B cell (primary cell): ENCODE measurements at regions of chr10 and their contacts with region 1.

Region 1: DNA sequence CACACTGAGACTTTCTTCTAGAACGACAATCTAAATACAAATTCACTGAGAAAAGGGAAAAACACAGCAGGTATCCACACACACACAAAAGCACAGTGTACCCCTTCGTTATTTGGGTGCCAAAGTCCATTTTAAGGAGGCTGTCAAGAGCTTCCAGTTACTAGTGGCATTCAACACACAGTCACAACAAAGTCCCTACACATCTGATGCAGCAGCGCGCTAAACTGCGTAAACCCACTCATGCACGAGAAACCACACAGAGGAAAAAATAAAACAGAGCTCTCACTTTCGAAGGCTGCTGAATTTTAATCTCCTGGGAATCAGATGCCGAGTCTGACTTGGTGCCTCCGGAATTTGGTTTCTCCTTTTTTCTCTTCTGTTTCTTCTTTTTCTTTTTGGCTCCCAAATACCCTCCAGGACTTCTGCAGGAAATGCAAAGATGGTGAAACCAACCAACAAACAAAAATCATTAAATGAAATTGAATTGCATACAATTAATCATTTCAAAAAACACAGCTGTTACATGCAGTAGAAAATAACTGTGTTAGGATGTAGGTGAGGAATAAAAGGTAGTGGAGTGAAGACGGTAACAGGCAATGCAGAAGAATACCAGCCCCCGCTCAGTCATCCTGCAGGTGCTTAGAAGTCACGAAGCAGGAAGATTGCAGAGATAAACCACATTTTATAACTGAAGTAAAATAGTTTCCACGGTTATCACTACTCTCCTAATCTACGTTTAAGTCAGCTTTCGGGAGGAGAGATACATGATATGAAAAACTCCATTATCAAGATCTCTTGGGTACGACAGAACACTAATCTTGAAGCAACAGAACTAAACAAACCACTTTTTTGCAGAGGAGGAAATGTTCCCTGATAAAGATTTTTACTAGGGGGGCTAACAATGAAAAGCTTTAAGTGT is 27.1 kb downstream of the NMT2 start:
- DNase-seq: peak; percentile 90
- ATAC-seq: peak; percentile 91
- H3K4me3 ChIP-seq: peak overlapping the region in 3 of 5 experiments; percentile 13 to 39 (median 24)
- H3K4me3 Mint-ChIP-seq: peak overlapping the region; percentile 84
- H3K27ac ChIP-seq: peak overlapping the region; percentile 20 to 58
- H3K27ac Mint-ChIP-seq: peak overlapping the region; percentile 92
- H3K4me1 ChIP-seq: peaks cover 23 to 24% of the 10 kb centered on the region in 2 donors
- H3K4me1 Mint-ChIP-seq: peaks cover 42% of the 10 kb centered on the region
- H3K27me3 ChIP-seq: no peaks in the 10 kb centered on the region
- H3K27me3 Mint-ChIP-seq: no peaks in the 10 kb centered on the region
- CTCF ChIP-seq: no peak

Region 2: DNA sequence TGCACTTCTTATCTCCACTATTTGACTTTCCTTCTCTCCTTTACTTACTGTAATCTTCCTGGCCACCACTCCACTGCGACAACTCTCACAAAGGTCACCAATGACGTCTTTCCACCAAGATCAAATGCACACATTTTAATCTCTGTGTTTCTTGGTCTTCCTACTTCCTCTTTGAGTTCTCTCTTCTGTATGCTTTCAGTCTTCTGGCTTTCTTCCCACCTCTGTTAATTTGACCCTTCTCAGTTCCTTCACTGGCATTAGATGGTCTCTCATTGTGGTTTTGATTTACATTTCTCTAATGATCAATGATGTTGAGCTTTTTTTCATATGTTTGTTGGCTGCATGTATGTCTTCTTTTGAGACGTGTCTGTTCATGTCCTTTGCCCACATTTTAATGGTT is 398.6 kb before region 1 on chr10:
- CTCF ChIA-PET with region 1: no interaction called
- POLR2A ChIA-PET with region 1: no interaction called
- intact Hi-C with region 1: loop called (anchors 10 kb)
- DNase-seq: peak; percentile 78
- ATAC-seq: peak; percentile 83
- H3K4me3 ChIP-seq: peak overlapping the region in 1 of 5 experiments; percentile 14
- H3K4me3 Mint-ChIP-seq: peak overlapping the region; percentile 74
- H3K27ac ChIP-seq: peak overlapping the region; percentile 93 to 98
- H3K27ac Mint-ChIP-seq: peak overlapping the region; percentile 88
- H3K4me1 ChIP-seq: peaks cover 71 to 76% of the 10 kb centered on the region in 2 donors
- H3K4me1 Mint-ChIP-seq: peaks cover 83% of the 10 kb centered on the region
- H3K27me3 ChIP-seq: no peaks in the 10 kb centered on the region
- H3K27me3 Mint-ChIP-seq: no peaks in the 10 kb centered on the region
- CTCF ChIP-seq: no peak

Region 3: DNA sequence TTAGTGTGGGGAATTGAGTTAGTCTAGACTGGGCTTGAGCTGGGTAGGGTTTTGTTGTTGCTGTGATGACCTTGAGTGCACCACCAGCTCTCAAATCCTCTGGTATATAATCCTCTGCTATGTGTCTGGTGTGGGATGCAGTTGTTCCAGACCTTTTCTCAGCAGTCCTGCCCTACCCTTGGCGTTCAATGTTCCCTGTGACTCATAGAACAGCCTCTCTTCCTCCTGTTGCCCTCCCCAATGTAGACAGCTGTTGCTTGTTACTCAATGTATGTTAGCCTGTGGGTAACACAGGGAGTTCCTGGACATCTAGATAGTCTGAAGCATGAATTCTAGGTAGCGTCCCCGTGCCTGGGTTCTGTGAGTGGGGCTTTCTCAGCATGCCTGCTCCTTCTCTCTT is 72.6 kb before region 1 on chr10:
- CTCF ChIA-PET with region 1: no interaction called
- POLR2A ChIA-PET with region 1: no interaction called
- intact Hi-C with region 1: no loop called
- DNase-seq: no peak
- ATAC-seq: no peak
- H3K4me3 ChIP-seq: no peak overlapping the region
- H3K4me3 Mint-ChIP-seq: no peak overlapping the region
- H3K27ac ChIP-seq: no peak overlapping the region
- H3K27ac Mint-ChIP-seq: no peak overlapping the region
- H3K4me1 ChIP-seq: no peaks in the 10 kb centered on the region
- H3K4me1 Mint-ChIP-seq: no peaks in the 10 kb centered on the region
- H3K27me3 ChIP-seq: peaks cover 0 to 6% (median 2%) of the 10 kb centered on the region in 4 experiments
- H3K27me3 Mint-ChIP-seq: peaks cover 28% of the 10 kb centered on the region
- CTCF ChIP-seq: no peak

Region 4: DNA sequence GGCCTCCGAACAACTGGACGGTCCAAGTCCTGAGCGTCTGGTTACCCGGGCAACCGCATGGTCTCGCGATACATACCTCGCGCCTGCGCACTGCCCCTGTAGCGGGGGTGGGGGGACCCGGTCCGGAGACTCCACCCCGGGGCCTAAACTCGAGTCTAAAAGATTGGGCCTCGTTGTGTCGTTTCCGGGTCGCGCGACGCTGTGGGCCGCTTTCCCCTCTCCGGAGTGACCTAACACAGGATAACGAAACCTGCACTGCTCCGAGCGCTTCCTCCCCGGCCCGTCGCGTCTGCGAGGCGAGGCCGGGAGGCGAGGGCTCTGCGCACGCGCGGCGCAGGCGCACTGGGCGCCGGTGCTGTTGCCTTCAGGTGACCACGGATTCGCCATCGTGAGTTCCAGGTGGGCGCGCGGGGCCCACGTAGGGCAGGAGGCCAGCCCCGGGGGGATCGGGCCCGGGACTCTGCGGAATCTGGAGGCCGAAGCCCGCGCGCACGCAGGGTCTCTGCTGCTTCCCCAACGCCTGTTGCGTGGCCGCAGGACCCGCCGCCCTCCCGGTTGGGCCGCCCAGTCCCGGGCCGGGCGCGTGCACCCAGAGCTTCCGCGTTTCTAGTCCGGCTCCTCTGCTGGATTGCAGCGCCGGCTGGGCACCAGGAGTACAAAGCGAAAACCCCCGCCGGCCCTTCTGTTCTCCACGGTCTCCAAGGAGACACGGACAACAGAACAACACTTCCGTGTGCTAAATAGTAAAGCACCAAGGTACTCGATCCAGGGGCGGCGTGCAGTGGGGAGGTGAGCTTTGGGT is 44.2 kb before region 1 on chr10 and contains the start of gene RPP38:
- CTCF ChIA-PET with region 1: no interaction called
- POLR2A ChIA-PET with region 1: no interaction called
- intact Hi-C with region 1: loop called (anchors 2 kb)
- DNase-seq: peak; percentile 98
- ATAC-seq: peak; percentile 75
- H3K4me3 ChIP-seq: peak within 1 kb of the TSS; percentile 80 to 91 (median 87)
- H3K4me3 Mint-ChIP-seq: peak within 1 kb of the TSS; percentile 93
- H3K27ac ChIP-seq: peak within 1 kb of the TSS; percentile 92 to 96
- H3K27ac Mint-ChIP-seq: peak within 1 kb of the TSS; percentile 94
- H3K4me1 ChIP-seq: peaks cover 23 to 27% of the 10 kb centered on the region in 2 donors
- H3K4me1 Mint-ChIP-seq: peaks cover 26% of the 10 kb centered on the region
- H3K27me3 ChIP-seq: no peaks in the 10 kb centered on the region
- H3K27me3 Mint-ChIP-seq: no peaks in the 10 kb centered on the region
- CTCF ChIP-seq: no peak
- total RNA-seq, gene RPP38: 24.5 and 24.8 TPM in 2 replicates

Region 5: GRCh38 chr10:15106352-15107013 is 34.9 kb before region 1 on chr10:
- CTCF ChIA-PET with region 1: interaction called, 22 read pairs
- POLR2A ChIA-PET with region 1: interaction called, 4 read pairs
- intact Hi-C with region 1: no loop called
- DNase-seq: peak; percentile 76
- ATAC-seq: peak; percentile 96
- H3K4me3 ChIP-seq: no peak overlapping the region
- H3K4me3 Mint-ChIP-seq: no peak overlapping the region
- H3K27ac ChIP-seq: peak overlapping the region in 1 of 2 donors; percentile 10
- H3K27ac Mint-ChIP-seq: peak overlapping the region; percentile 43
- H3K4me1 ChIP-seq: peaks cover 0 to 3% of the 10 kb centered on the region in 2 donors
- H3K4me1 Mint-ChIP-seq: peaks cover 6% of the 10 kb centered on the region
- H3K27me3 ChIP-seq: no peaks in the 10 kb centered on the region
- H3K27me3 Mint-ChIP-seq: no peaks in the 10 kb centered on the region
- CTCF ChIP-seq: peak; percentile 92

Region 6: GRCh38 chr10:15122477-15123030 is 18.8 kb before region 1 on chr10:
- CTCF ChIA-PET with region 1: interaction called, 10 read pairs
- POLR2A ChIA-PET with region 1: no interaction called
- intact Hi-C with region 1: no loop called
- DNase-seq: no peak
- ATAC-seq: no peak
- H3K4me3 ChIP-seq: no peak overlapping the region
- H3K4me3 Mint-ChIP-seq: no peak overlapping the region
- H3K27ac ChIP-seq: no peak overlapping the region
- H3K27ac Mint-ChIP-seq: no peak overlapping the region
- H3K4me1 ChIP-seq: no peaks in the 10 kb centered on the region
- H3K4me1 Mint-ChIP-seq: peaks cover 10% of the 10 kb centered on the region
- H3K27me3 ChIP-seq: no peaks in the 10 kb centered on the region
- H3K27me3 Mint-ChIP-seq: no peaks in the 10 kb centered on the region
- CTCF ChIP-seq: no peak

Region 7: DNA sequence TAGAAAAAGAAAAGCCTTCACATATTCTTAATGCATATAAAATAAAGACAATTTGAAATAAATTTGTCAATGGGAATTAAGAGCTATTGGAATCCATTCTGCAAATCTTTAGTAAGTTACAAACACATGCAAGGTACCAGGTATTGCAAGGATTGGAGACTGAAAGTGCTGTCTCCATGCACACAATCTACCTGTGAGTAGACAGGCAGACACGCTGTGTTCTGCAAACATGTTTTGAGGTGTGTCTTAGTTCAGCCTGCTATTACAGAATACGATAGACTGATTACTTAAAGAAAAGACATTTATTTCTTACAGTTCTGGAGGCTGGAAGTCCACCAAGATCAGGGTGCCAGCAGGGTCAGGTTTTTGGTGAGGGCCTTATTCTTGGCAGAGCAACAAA is 17.1 kb after region 1 on chr10:
- CTCF ChIA-PET with region 1: no interaction called
- POLR2A ChIA-PET with region 1: no interaction called
- intact Hi-C with region 1: no loop called
- DNase-seq: no peak
- ATAC-seq: no peak
- H3K4me3 ChIP-seq: no peak overlapping the region
- H3K4me3 Mint-ChIP-seq: no peak overlapping the region
- H3K27ac ChIP-seq: no peak overlapping the region
- H3K27ac Mint-ChIP-seq: no peak overlapping the region
- H3K4me1 ChIP-seq: peaks cover 0 to 3% of the 10 kb centered on the region in 2 donors
- H3K4me1 Mint-ChIP-seq: peaks cover 2% of the 10 kb centered on the region
- H3K27me3 ChIP-seq: peaks cover 0 to 2% (median 0%) of the 10 kb centered on the region in 4 experiments
- H3K27me3 Mint-ChIP-seq: peaks cover 6% of the 10 kb centered on the region
- CTCF ChIP-seq: no peak

Region 8: DNA sequence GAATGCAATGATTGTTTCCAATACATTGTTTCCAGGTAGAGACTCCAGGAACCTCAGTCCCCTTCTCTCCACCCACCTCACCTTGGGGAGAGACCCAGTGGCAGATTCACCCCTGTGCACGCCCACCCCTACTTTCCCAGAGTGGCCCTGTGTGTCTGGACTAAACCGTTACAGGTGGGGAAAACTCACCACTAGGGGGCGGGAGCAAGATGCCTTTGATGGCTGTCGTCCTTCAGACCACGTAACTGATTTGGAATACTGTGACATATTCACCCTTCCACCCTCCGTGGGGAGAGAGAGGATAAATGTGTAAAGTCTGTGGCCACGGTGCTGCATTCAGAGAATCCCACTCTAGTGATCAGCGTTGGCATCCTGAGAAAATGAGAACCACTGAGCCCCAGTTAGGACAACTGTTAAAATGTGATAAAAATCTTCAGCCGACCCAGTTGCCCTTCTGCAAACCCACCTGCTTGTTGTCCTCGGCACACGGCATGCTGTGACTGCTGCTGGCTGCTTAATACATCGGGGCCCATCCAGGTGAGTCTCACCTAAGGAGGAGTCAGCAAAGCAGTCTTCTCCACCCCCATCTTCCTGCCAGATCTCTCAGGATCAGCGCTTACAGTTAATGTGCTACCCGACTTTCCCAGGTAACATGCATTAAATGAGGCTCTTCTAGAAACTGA is 68.6 kb after region 1 on chr10:
- CTCF ChIA-PET with region 1: no interaction called
- POLR2A ChIA-PET with region 1: interaction called, 7 read pairs
- intact Hi-C with region 1: loop called (anchors 1 kb)
- DNase-seq: peak; percentile 79
- ATAC-seq: peak; percentile 66
- H3K4me3 ChIP-seq: peak overlapping the region in 1 of 5 experiments; percentile 27
- H3K4me3 Mint-ChIP-seq: no peak overlapping the region
- H3K27ac ChIP-seq: no peak overlapping the region
- H3K27ac Mint-ChIP-seq: no peak overlapping the region
- H3K4me1 ChIP-seq: peaks cover 16 to 18% of the 10 kb centered on the region in 2 donors
- H3K4me1 Mint-ChIP-seq: peaks cover 28% of the 10 kb centered on the region
- H3K27me3 ChIP-seq: no peaks in the 10 kb centered on the region
- H3K27me3 Mint-ChIP-seq: no peaks in the 10 kb centered on the region
- CTCF ChIP-seq: peak; percentile 79

Region 9: DNA sequence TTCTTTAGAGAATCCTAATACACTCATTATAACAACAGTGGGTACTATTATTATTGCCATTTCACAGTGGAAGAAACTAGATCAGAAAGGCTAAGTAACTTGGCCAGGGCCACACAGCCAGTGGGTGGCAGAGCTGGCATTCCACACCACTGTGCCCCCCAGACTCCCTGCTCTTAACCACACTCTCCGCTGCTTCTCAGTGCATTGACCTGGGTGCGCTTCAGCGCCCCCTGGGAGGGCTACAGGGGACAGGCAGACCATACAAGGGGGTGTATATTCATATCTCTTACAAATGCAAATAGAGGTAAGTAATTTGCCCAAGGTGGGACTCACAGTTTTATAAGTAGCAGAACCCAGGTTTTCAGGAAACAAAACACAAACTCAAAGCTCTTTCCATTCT is 104.1 kb after region 1 on chr10:
- CTCF ChIA-PET with region 1: no interaction called
- POLR2A ChIA-PET with region 1: no interaction called
- intact Hi-C with region 1: no loop called
- DNase-seq: peak; percentile 11
- ATAC-seq: peak; percentile 17
- H3K4me3 ChIP-seq: no peak overlapping the region
- H3K4me3 Mint-ChIP-seq: no peak overlapping the region
- H3K27ac ChIP-seq: no peak overlapping the region
- H3K27ac Mint-ChIP-seq: no peak overlapping the region
- H3K4me1 ChIP-seq: no peaks in the 10 kb centered on the region
- H3K4me1 Mint-ChIP-seq: no peaks in the 10 kb centered on the region
- H3K27me3 ChIP-seq: no peaks in the 10 kb centered on the region
- H3K27me3 Mint-ChIP-seq: no peaks in the 10 kb centered on the region
- CTCF ChIP-seq: peak; percentile 27